Right cardiac atrium (tissue), 5 donors: ENCODE measurements at regions of chr13 and their contacts with region 1.

Region 1: DNA sequence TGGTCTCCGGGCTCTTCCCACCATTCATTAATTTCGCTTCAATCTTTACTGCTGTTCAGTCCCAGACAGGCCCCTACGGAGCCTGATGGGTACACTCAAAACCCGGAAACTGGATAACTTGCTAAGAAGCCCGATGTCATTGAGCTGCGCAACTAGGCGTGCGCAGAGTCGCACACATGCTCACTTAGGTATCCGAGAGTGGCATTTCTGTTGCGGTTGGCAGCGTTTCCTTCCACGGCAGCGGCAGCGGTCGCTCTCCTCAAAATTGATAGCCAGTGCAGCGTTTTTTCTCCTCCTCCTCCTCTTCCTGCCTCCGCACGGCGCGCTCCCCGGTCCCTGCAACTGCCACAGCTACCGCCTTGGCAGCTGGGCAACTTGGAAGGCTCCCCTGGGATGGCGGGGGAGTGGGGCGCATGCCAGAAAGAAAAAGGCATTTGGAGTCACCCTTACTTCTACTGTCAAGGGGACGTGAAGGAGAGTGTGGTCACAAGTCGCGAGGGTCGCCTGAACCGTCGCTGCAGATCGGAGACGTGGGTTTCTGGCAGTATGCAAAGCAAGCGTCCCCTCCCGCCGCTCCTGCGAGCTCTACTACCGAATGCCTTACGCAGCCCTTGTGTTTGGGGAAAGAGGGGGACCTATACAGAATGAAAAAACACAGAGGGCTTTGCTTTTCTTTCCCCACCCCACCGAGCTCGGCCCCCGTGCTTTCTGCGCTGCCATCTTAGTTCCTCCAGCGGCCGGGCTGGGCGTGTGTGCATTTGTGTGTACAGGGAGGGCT is 2.4 kb upstream of the MYCBP2 start:
- DNase-seq: peak; percentile 87 to 94 (median 93)
- ATAC-seq: peak; percentile 83 to 88
- H3K4me3 ChIP-seq: peak overlapping the region; percentile 76
- H3K27ac ChIP-seq: peak overlapping the region; percentile 89
- H3K4me1 ChIP-seq: peaks cover 5% of the 10 kb centered on the region
- H3K27me3 ChIP-seq: no peaks in the 10 kb centered on the region

Region 2: DNA sequence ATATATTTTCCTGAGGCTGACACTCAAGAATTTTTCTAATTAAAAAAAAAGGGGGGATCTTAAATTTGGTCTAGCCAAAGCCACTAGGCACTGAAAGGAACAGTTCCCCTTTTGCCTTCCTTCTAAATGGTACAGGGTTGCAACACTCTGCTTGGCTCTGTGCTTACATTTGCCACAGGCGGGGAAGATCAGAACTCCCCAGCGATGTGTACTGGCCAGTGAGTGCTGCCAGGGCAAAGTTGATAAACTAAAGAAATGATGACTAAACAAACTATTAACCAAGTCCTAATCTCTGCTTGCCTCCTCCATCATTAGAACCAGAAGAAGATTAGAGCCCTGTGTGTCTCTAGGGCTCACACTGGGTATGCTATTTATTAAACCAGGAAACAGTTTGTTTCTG is 130.9 kb after region 1 on chr13:
- intact Hi-C with region 1: loop called in 1 of 4 experiments (anchors 5 kb)
- DNase-seq: peak; percentile 74 to 87 (median 77)
- ATAC-seq: peak; percentile 96 to 98
- H3K4me3 ChIP-seq: no peak overlapping the region
- H3K27ac ChIP-seq: no peak overlapping the region
- H3K4me1 ChIP-seq: no peaks in the 10 kb centered on the region
- H3K27me3 ChIP-seq: no peaks in the 10 kb centered on the region

Region 3: DNA sequence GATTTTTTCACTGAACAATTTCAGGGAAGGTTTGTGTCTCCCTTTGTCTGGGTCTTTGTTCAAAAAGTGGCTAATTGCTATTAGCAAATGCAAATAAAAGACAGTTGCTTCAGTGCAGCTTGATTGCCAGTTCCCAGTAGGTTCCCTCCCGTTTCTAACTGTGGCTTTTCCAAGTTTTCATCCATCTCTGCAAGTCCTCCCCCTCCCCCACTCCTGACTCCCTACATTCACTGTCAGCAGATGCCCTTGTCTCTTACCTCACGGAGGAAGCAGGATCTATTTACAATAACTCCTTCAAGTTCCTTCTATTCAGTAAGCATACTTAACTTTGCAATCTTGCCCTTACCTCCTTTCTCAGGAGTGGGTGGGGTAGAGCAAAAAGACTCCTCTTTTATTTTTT is 150.7 kb after region 1 on chr13:
- intact Hi-C with region 1: loop called in 1 of 4 experiments (anchors 5 kb)
- DNase-seq: no peak
- ATAC-seq: no peak
- H3K4me3 ChIP-seq: no peak overlapping the region
- H3K27ac ChIP-seq: no peak overlapping the region
- H3K4me1 ChIP-seq: no peaks in the 10 kb centered on the region
- H3K27me3 ChIP-seq: no peaks in the 10 kb centered on the region

Region 4: DNA sequence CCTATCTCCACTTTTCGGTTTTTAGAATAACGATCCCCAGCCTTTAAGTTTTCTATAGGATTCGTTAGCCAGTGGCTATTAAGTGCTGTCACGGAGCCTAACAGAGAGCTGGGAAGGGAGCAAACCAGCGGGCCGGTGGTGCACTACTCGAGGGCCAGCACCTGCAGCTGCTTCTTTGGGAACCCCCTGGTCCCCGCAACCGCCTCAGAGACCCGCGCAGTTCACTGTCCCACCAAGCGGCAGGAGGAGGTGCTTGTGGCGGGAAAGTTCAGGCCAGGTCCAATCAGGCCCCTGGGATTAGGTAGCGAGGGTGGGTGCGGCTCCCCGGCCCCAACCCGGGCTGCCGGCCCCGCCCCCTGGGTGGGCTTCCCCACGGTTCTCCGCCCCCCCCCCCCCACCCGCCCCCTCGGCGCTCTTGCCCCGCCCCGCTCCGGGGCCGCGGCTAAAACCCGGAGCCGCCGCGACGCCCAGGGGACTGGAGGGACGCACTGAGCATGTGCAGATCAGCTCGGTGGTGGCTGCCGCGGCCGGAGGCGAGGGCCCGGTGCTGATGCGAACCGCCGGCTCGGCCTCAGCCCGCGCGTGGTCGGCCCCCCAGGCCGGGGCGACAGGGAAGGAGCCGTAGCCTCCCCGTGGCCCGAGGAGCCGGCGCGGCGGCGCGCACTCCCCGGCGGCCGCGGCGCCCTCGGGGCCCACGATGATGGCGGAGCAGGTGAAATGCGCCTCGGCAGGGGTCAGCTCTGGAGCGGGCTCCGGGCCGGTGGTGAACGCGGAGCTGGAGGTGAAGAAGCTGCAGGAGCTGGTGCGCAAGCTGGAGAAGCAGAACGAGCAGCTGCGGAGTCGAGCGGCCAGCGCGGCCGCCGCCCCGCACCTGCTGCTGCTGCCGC is 368.1 kb after region 1 on chr13 and contains the start of gene SLAIN1:
- intact Hi-C with region 1: no loop called
- DNase-seq: peak; percentile 87 to 94 (median 94)
- ATAC-seq: peak; percentile 97 to 98
- H3K4me3 ChIP-seq: peak within 1 kb of the TSS; percentile 98
- H3K27ac ChIP-seq: peak within 1 kb of the TSS; percentile 8
- H3K4me1 ChIP-seq: no peaks in the 10 kb centered on the region
- H3K27me3 ChIP-seq: no peaks in the 10 kb centered on the region
- total RNA-seq, gene SLAIN1: 10.6 to 16.2 (median 13.0) TPM